Activated naive CD4-positive, alpha-beta T cell treated with anti-CD3 and anti-CD28 coated beads, Interleukin-2, amount 10 ng/mL, durations not matched to agents 7 days and 5 days (primary cell): ENCODE measurements at regions of chr1 and their contacts with region 1.

Region 1: DNA sequence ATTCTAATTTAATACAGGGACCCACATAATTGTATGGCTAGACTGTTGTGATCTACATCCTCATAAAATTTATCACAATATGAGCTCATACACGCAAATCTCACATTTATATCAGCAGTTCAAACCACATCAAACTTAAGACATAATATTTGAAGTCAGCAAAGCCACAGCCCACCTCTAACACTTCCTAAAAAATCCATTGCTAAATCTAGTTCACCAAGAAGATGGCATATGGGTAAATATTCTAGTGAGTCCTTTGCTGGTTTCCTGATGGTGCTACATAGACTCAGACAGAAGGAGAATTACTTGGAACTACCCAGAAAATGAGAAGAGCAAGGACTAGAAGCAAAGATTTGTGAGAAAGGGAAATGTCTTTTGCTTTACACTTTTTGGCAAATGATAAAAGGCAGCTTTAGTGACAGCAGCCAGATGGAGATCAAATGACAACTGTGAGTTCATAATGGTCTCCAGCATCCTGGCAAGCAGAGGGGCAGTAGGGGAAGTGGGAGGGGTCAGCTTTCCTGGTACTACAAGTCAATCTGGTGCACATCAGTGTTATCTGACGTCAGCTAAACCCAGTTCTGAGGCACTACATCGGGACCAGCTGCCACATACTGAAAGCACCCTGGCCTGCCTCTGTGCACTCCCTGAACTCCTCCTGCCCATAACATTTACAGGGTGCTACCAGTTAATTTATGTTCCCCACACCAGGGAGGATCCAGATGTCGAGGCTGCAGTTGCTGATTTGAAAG is 10.6 kb upstream of the GADD45A start:
- DNase-seq: peak; percentile 70
- H3K4me3 Mint-ChIP-seq: peak overlapping the region; percentile 31
- H3K27ac Mint-ChIP-seq: peak overlapping the region; percentile 85
- H3K4me1 Mint-ChIP-seq: peaks cover 29% of the 10 kb centered on the region
- H3K27me3 Mint-ChIP-seq: peaks cover 18% of the 10 kb centered on the region

Region 2: DNA sequence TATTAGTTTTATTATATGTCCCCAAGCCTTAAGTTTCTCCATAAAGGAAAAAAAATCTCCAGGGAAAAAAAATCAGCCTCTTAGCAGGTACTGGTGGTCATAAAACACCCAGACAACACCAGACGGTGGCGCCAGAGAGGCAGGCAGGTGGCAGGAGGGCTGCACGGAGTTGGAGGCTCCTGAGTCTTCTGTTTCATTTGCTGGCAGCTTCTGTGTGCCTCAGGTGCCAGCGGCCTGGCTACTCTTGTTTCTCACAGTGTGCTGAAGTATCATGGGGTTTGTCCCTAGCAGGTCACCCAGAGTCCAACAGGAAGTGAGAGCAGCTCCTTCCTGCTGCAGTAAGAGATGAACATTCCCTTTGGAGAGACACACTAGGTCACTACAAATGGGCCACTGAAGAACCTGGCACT is 112.7 kb before region 1 on chr1:
- CTCF ChIA-PET with region 1: interaction called, 10 read pairs
- DNase-seq: peak; percentile 91
- H3K4me3 Mint-ChIP-seq: no peak overlapping the region
- H3K27ac Mint-ChIP-seq: no peak overlapping the region
- H3K4me1 Mint-ChIP-seq: no peaks in the 10 kb centered on the region
- H3K27me3 Mint-ChIP-seq: peaks cover 14% of the 10 kb centered on the region

Region 3: DNA sequence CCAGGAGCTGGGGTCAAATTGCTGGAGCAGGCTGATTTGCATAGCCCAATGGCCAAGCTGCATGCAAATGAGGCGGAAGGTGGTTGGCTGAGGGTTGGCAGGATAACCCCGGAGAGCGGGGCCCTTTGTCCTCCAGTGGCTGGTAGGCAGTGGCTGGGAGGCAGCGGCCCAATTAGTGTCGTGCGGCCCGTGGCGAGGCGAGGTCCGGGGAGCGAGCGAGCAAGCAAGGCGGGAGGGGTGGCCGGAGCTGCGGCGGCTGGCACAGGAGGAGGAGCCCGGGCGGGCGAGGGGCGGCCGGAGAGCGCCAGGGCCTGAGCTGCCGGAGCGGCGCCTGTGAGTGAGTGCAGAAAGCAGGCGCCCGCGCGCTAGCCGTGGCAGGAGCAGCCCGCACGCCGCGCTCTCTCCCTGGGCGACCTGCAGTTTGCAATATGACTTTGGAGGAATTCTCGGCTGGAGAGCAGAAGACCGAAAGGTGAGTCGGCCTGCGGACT is 10.7 kb after region 1 on chr1 and contains the start of gene GADD45A:
- CTCF ChIA-PET with region 1: interaction called, 17 read pairs
- DNase-seq: peak; percentile 98
- H3K4me3 Mint-ChIP-seq: peak within 1 kb of the TSS; percentile 97
- H3K27ac Mint-ChIP-seq: peak within 1 kb of the TSS; percentile 99
- H3K4me1 Mint-ChIP-seq: peaks cover 37% of the 10 kb centered on the region
- H3K27me3 Mint-ChIP-seq: no peaks in the 10 kb centered on the region